ENCODE measurements at regions of chr9 and their contacts with region 1.

Region 1: DNA sequence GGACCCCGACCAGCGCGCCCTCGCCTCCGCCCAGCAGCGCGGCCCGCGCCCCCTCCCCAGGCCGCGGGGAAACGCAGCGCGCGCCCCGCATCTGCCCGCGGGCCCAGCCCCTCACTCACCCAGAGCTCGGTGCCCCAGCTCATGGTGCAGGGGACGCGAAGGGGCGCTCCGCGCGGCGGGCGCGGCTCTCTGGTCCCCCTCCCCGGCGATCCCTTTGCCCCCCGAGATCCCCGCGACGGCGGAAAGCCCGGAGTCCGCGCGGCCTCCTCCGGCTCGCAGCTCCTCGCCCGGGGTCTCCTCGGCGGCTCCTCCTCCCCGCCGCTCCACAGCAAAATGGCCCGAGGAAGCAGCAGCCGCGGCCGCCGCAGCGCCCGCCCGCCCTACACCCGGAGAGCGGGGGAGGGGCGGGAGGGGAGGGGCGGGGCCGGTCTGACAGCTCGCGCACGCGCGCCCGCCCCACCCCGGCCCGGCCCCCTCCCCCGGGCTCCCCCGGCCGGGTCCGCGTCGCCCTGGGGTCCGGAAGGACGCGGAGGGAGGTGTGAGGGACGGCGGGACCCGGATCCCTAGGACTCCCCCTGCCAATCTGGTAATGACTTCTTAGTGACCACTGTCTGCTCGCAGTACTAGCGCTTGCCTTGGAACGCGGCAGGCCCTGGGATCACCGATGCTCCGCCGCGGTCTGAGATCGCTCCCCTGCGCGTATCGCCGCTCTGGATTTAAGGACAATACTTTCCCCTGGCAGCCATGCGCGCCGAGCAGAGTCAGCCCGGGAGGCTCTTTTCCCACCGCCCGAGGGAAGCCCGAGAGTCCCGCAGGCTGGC is at the start of gene FNBP1:
- DNase-seq: peak; percentile 80
- H3K4me3 Mint-ChIP-seq: peak within 1 kb of the TSS; percentile 97
- H3K27ac Mint-ChIP-seq: peak within 1 kb of the TSS; percentile 96
- H3K4me1 Mint-ChIP-seq: peaks cover 39% of the 10 kb centered on the region
- H3K27me3 Mint-ChIP-seq: no peaks in the 10 kb centered on the region
- total RNA-seq, gene FNBP1: 358 and 359 TPM in 2 replicates

Region 2: DNA sequence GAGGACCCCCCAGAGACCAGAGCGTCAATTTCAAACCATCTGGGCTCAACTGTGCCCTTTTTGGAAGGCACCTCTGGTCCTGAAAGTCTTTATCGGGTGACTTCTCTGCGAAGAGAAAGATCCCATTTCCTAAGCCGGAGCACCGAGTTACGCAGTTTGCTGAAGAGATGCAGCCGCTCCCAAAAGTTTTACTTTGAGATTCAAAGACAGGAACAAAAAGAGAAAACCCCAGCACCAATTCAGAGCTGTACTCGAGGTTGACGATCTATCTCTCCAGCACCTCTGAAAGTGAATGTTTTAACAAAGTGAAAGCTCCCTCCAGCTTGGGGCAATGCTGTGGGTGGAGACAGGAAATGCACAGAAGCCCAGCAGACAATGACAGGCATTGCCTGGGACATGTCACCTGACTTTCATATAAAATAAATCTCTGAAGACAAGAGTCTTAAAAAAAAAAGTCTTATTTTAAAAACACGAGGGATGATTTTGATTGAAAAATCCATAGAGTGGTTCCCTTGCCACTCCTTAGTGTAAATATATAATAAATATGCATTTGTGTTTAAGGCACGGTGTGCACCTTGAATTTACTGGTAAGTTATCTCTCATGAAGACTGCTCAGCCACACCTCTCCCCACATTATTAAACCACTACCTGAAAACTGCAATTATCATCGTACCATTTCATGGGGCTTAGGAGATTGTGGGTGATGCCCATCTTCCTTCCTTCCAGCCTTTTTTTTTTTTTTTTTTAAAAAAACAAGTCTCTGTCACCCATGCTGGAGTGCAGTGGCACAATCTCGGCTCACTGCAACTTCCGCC is 79.9 kb before region 1 on chr9:
- intact Hi-C with region 1: loop called (anchors 1 kb)
- DNase-seq: peak; percentile 76
- H3K4me3 Mint-ChIP-seq: peak overlapping the region; percentile 80
- H3K27ac Mint-ChIP-seq: peak overlapping the region; percentile 89
- H3K4me1 Mint-ChIP-seq: peaks cover 67% of the 10 kb centered on the region
- H3K27me3 Mint-ChIP-seq: no peaks in the 10 kb centered on the region

Region 3: GRCh38 chr9:130029223-130029973 is 13.6 kb before region 1 on chr9:
- intact Hi-C with region 1: loop called (anchors 1 kb)
- DNase-seq: no peak
- H3K4me3 Mint-ChIP-seq: peak overlapping the region; percentile 65
- H3K27ac Mint-ChIP-seq: peak overlapping the region; percentile 95
- H3K4me1 Mint-ChIP-seq: peaks cover 85% of the 10 kb centered on the region
- H3K27me3 Mint-ChIP-seq: no peaks in the 10 kb centered on the region

Region 4: DNA sequence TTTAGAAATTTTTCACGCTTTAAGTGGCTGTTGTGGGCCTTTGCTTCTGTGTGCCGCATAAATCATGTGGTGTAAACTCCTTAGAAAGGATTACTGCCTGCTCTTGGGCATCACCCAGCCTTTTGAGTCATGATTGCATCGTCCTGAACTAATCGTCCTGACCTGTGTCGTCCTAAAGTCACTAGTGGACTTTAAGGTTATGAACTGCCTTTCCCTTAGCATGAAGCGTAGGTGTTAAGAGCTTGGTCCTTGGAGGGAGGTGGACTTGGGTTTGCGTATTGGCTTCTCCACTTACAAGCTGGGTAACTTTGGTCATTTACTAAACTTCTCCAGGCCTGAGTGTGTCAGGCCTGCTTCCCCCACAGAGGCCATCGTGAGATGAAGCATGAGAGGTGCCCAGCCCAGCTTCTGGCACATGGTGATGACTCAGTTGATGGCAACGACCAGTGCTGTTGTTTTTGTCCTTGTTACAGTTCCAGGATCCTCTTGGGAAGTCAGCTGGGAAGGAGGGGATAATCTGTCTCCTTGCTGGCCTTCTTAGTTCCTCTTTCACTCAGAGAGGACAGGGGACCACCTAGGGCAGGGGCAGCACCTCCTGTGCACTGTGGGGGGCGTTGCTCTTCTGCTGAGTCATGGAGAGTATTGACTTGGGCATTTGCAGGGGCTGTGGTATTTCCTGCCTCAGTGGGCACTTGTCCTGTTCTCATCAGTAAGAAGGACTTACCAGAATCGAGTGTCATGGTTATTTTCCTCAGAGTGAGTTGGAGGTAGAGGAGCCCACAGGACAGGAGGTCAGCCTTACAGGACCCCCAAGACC is 75.0 kb after region 1 on chr9:
- intact Hi-C with region 1: no loop called
- DNase-seq: no peak
- H3K4me3 Mint-ChIP-seq: no peak overlapping the region
- H3K27ac Mint-ChIP-seq: no peak overlapping the region
- H3K4me1 Mint-ChIP-seq: no peaks in the 10 kb centered on the region
- H3K27me3 Mint-ChIP-seq: no peaks in the 10 kb centered on the region

Region 5: DNA sequence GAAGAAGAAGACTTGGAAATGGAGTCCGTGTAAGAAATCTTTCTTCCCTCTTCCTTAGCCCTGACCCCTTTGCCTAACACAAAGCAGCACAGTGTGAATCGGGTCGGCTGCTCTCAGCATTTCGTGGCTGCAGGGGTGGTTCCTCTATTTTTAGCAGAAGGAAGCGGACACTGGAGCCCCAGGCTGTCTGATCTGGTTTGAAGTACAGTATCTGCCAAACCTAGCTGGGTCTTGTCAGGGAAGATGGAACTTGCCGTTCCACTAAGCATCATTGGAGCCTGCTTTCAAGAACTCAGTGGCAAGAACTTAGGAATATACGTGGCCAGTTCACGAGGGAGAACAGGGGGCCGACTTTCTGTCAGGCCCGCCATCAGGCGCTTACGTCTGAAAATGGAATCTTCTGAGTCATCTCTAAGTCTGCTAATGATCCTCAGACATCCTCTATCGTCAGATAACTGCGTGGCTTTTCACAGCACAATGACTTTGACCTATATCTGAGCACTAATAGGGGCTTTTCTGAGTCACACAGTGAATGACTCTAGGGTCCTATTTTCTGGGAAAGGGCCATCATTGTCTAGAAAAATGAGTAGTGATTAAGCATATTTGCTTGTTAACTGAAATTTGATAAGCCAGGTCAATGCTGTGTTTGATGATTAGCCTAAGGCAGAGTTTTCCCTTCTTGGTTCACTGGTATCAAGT is 85.8 kb after region 1 on chr9:
- intact Hi-C with region 1: loop called (anchors 2 kb)
- DNase-seq: peak; percentile 38
- H3K4me3 Mint-ChIP-seq: peak overlapping the region; percentile 82
- H3K27ac Mint-ChIP-seq: peak overlapping the region; percentile 100
- H3K4me1 Mint-ChIP-seq: peaks cover 43% of the 10 kb centered on the region
- H3K27me3 Mint-ChIP-seq: no peaks in the 10 kb centered on the region